ENCODE measurements at regions of chr14 and their contacts with region 1.

Region 1: GRCh38 chr14:29376237-29376636 is 551.4 kb downstream of the PRKD1 start:
- DNase-seq: no peak
- H3K4me3 ChIP-seq: no peak overlapping the region
- CTCF ChIP-seq: no peak
- POLR2A ChIP-seq: no peak

Region 2: DNA sequence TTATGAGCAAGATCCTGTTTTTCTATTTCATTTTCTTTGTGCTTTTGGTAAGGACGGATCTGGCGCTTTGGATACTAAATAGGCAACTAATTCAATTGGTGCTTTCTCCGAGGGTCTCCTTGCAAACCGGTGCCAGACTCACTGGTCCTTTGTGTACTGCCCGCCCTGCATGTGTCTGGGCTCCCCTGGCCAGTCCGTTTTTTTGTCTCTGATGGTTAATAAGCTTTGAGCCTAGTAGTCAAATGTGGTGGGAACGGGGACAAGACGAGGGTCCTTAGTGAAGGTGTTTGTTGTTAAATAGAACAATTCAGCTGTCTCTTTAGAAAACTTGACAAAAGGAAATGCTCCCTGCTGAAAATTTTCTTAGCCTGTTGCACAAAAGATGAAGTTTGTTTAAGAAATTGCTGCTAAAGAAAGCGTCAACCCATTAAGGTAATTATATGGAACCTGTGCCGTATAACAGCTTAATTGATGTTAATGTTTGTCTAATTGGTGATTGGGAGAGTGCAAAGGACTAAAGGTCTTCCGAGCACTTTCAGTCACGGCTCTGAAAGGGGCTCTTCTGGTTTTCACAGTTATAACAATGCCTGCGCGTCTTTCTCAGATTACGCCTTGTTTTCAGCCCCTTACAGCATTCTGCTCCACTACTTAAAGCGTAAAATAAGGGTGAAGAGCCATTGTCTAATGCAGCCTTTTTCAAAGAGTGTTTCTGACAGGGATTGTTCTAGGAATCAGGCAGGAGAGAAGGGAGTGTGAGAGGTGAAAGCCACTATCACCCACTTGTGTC is 14.0 kb after region 1 on chr14:
- intact Hi-C with region 1: loop called (anchors 2 kb)
- DNase-seq: no peak
- H3K4me3 ChIP-seq: no peak overlapping the region
- CTCF ChIP-seq: no peak
- POLR2A ChIP-seq: no peak

Region 3: DNA sequence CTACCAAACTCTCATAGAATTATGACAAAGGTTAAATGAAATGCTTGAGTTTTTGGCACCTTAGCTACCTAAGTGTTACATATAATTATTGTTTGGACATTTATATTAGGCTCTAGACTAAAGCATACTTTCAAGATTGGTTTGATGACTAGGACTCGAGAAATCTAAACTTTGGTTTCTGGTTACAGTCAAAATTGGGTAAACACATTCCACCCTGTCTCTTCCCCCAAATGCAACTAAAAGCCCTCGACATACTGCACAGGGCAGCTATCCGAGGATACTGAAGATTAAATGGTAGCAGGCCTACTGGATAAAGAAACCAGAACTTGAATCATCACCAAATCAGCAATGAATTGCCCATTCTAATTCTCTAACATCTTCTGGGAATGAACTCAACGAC is 182.3 kb after region 1 on chr14:
- intact Hi-C with region 1: no loop called
- DNase-seq: no peak
- H3K4me3 ChIP-seq: no peak overlapping the region
- CTCF ChIP-seq: no peak
- POLR2A ChIP-seq: no peak